Activated CD4-positive, alpha-beta T cell treated with anti-CD3 and anti-CD28 coated beads for 36 hours (primary cell): ENCODE measurements at regions of chr19 and their contacts with region 1.

Region 1: DNA sequence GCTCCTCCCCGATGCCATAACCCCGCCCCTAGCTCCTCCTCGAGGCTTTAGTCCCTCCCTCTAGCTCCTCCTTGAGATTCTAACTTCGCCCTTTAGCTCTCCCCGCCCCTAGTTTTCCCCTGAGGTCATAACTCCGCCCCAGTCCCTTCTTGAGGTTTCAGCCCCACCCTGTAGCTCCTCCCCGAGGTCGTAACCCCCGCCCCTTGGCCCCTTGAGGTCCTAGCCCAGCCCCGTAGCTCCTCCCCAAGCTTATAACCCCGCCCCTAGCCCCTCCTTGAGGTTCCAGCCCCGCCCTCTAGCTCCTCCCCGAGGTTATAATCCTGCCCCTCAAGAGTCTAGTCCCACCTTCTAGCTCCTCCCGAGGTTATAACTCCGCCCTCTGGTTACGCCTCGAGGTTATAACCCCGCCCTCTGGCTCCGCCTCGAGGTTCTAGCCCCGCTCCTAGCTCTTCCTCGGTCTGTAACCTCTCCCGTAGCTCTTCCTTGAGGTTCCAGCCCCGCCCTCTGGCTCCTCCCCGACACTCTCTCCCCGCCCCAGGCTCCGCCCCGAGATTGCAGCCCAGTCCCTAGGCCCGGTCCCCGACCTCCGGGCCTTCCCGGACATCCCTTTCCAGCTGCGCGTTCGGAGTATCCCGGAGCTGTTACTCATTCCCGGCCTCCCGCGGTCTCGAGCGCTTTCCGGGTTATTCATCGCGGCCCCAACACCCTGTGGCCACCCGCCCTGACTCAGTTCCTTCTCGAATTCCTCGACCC is 1.4 kb downstream of the PLAUR start:
- DNase-seq: peak; percentile 99
- ATAC-seq: peak; percentile 86
- H3K4me3 Mint-ChIP-seq: peak overlapping the region; percentile 85
- H3K27ac Mint-ChIP-seq: peak overlapping the region; percentile 90
- H3K4me1 Mint-ChIP-seq: peaks cover 42% of the 10 kb centered on the region
- H3K27me3 Mint-ChIP-seq: no peaks in the 10 kb centered on the region

Region 2: GRCh38 chr19:43474986-43475705 is 193.4 kb before region 1 on chr19:
- CTCF ChIA-PET with region 1: no interaction called
- POLR2A ChIA-PET with region 1: no interaction called
- intact Hi-C with region 1: loop called in 1 of 2 experiments (anchors 1 kb)
- DNase-seq: peak; percentile 98
- ATAC-seq: peak; percentile 86
- H3K4me3 Mint-ChIP-seq: peak overlapping the region; percentile 62
- H3K27ac Mint-ChIP-seq: peak overlapping the region; percentile 90
- H3K4me1 Mint-ChIP-seq: peaks cover 35% of the 10 kb centered on the region
- H3K27me3 Mint-ChIP-seq: no peaks in the 10 kb centered on the region

Region 3: GRCh38 chr19:43575156-43575950 is 93.2 kb before region 1 on chr19 and contains the starts of genes PINLYP and XRCC1:
- CTCF ChIA-PET with region 1: no interaction called
- POLR2A ChIA-PET with region 1: no interaction called
- intact Hi-C with region 1: loop called in 1 of 2 experiments (anchors 1 kb)
- DNase-seq: peak; percentile 99
- ATAC-seq: peak; percentile 99
- H3K4me3 Mint-ChIP-seq: peak within 1 kb of the TSS; percentile 87
- H3K27ac Mint-ChIP-seq: peak within 1 kb of the TSS; percentile 94
- H3K4me1 Mint-ChIP-seq: peaks cover 41% of the 10 kb centered on the region
- H3K27me3 Mint-ChIP-seq: no peaks in the 10 kb centered on the region
- total RNA-seq, gene PINLYP: 3.5 to 3.6 TPM
- total RNA-seq, gene XRCC1: 31.6 to 40.0 TPM

Region 4: GRCh38 chr19:43609872-43610271 is 58.7 kb before region 1 on chr19:
- CTCF ChIA-PET with region 1: no interaction called
- POLR2A ChIA-PET with region 1: no interaction called
- intact Hi-C with region 1: no loop called
- DNase-seq: no peak
- ATAC-seq: no peak
- H3K4me3 Mint-ChIP-seq: no peak overlapping the region
- H3K27ac Mint-ChIP-seq: no peak overlapping the region
- H3K4me1 Mint-ChIP-seq: no peaks in the 10 kb centered on the region
- H3K27me3 Mint-ChIP-seq: no peaks in the 10 kb centered on the region

Region 5: DNA sequence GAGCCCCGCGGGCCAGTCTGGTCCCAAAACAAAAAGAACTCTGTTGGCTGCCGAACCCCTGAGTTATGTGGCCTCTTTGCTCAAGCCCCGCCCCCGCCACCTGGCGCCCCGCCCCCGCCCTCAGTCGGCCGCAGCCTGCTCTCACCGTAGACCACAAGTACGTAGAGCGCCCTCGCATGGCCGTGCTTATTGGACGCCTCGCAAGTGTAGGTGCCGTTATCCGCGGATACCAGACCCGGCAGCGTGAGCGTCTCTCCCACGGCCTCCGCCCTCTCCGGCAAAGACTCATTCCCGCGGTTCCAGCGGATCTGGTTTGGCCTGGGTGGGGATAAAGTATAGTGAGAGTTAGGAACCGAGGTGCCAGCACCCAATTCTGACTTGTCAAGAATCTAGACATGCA is 43.6 kb before region 1 on chr19:
- CTCF ChIA-PET with region 1: no interaction called
- POLR2A ChIA-PET with region 1: no interaction called
- intact Hi-C with region 1: loop called in 1 of 2 experiments (anchors 1 kb)
- DNase-seq: peak; percentile 96
- ATAC-seq: peak; percentile 90
- H3K4me3 Mint-ChIP-seq: no peak overlapping the region
- H3K27ac Mint-ChIP-seq: no peak overlapping the region
- H3K4me1 Mint-ChIP-seq: peaks cover 23% of the 10 kb centered on the region
- H3K27me3 Mint-ChIP-seq: peaks cover 6% of the 10 kb centered on the region

Region 6: GRCh38 chr19:43678512-43679261 is 10.1 kb after region 1 on chr19:
- CTCF ChIA-PET with region 1: no interaction called
- POLR2A ChIA-PET with region 1: no interaction called
- intact Hi-C with region 1: no loop called
- DNase-seq: no peak
- ATAC-seq: no peak
- H3K4me3 Mint-ChIP-seq: no peak overlapping the region
- H3K27ac Mint-ChIP-seq: no peak overlapping the region
- H3K4me1 Mint-ChIP-seq: peaks cover 15% of the 10 kb centered on the region
- H3K27me3 Mint-ChIP-seq: no peaks in the 10 kb centered on the region

Region 7: GRCh38 chr19:43754503-43755255 is 86.1 kb after region 1 on chr19 and contains the start of gene SMG9:
- CTCF ChIA-PET with region 1: interaction called, 14 read pairs
- POLR2A ChIA-PET with region 1: interaction called, 14 read pairs
- intact Hi-C with region 1: loop called (anchors 1 kb)
- DNase-seq: peak; percentile 99
- ATAC-seq: peak; percentile 75
- H3K4me3 Mint-ChIP-seq: peak within 1 kb of the TSS; percentile 99
- H3K27ac Mint-ChIP-seq: peak within 1 kb of the TSS; percentile 99
- H3K4me1 Mint-ChIP-seq: peaks cover 69% of the 10 kb centered on the region
- H3K27me3 Mint-ChIP-seq: no peaks in the 10 kb centered on the region
- total RNA-seq, gene SMG9: 64.4 to 65.2 TPM

Region 8: GRCh38 chr19:43809762-43810696 is 141.4 kb after region 1 on chr19:
- CTCF ChIA-PET with region 1: interaction called, 12 read pairs
- POLR2A ChIA-PET with region 1: interaction called, 6 read pairs
- intact Hi-C with region 1: no loop called
- DNase-seq: no peak
- ATAC-seq: peak; percentile 83
- H3K4me3 Mint-ChIP-seq: no peak overlapping the region
- H3K27ac Mint-ChIP-seq: no peak overlapping the region
- H3K4me1 Mint-ChIP-seq: no peaks in the 10 kb centered on the region
- H3K27me3 Mint-ChIP-seq: peaks cover 8% of the 10 kb centered on the region